ENCODE measurements at regions of chr6 and their contacts with region 1.

Region 1: GRCh38 chr6:26156076-26156849 is 69.0 kb downstream of the HFE start:
- DNase-seq: peak; percentile 80 to 92 (median 88)
- ATAC-seq: peak; percentile 61
- H3K4me3 ChIP-seq: peak overlapping the region; percentile 82
- H3K4me3 Mint-ChIP-seq: peak overlapping the region; percentile 96 to 100 (median 98)
- H3K27ac ChIP-seq: peak overlapping the region; percentile 92
- H3K27ac Mint-ChIP-seq: peak overlapping the region; percentile 95 to 99 (median 98)
- H3K4me1 ChIP-seq: peaks cover 19 to 23% of the 10 kb centered on the region in 2 donors
- H3K4me1 Mint-ChIP-seq: peaks cover 16 to 58% (median 30%) of the 10 kb centered on the region in 7 donors
- H3K27me3 ChIP-seq: no peaks in the 10 kb centered on the region
- H3K27me3 Mint-ChIP-seq: peaks cover 0 to 33% (median 0%) of the 10 kb centered on the region in 5 donors

Region 2: DNA sequence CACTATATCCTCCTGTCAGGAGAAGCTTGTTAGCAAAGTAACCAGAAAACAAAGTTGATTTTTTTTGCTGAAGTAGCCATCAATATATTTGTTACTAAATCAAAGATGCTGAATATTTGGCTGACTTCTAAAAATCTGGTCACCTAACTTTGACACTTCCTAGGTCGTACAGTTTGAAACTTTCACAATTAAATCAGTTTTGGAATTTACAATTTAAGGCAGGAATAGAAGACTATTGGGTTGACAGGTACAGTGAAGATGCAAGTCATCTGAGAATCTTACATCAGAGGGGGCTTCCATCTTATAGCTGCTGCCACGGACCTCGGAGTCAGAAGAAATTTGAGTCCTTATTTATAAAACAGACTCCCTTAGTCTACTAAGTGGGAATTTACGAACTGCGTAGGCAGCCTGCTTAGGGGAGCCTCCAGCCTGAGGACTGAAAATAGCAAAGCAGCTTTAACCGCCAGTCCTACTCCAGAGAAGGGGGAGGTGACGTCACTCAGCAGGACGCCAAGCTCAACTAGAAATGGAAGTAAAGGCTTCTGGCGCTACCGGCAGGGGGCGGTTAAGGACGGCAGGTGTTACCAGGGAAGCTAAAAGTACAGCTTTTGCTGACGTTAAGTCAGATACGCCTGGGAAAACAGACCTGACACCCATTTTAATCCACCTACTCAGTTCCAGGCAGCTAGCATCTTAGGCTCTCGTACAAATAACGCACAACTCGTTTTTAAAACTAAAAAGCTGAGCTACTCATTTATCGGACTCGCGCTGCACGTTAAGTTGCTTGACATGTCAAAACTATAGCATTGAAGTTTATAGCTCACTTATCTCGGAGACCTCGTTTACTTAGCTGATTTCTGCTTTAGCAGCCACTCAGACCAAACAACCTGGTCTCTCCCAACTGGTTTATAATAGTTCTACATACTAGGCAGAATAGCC is 130.1 kb before region 1 on chr6:
- CTCF ChIA-PET with region 1: interaction called, 4 read pairs
- POLR2A ChIA-PET with region 1: interaction called, 409 read pairs
- intact Hi-C with region 1: loop called in 1 of 2 experiments (anchors 1 kb)
- DNase-seq: peak; percentile 82 to 98 (median 95)
- ATAC-seq: peak; percentile 60
- H3K4me3 ChIP-seq: peak overlapping the region; percentile 75
- H3K4me3 Mint-ChIP-seq: peak overlapping the region; percentile 81 to 99 (median 94)
- H3K27ac ChIP-seq: peak overlapping the region; percentile 94
- H3K27ac Mint-ChIP-seq: peak overlapping the region; percentile 93 to 100 (median 98)
- H3K4me1 ChIP-seq: peaks cover 11 to 22% of the 10 kb centered on the region in 2 donors
- H3K4me1 Mint-ChIP-seq: peaks cover 12 to 81% (median 50%) of the 10 kb centered on the region in 7 donors
- H3K27me3 ChIP-seq: no peaks in the 10 kb centered on the region
- H3K27me3 Mint-ChIP-seq: peaks cover 0 to 9% (median 0%) of the 10 kb centered on the region in 5 donors

Region 3: DNA sequence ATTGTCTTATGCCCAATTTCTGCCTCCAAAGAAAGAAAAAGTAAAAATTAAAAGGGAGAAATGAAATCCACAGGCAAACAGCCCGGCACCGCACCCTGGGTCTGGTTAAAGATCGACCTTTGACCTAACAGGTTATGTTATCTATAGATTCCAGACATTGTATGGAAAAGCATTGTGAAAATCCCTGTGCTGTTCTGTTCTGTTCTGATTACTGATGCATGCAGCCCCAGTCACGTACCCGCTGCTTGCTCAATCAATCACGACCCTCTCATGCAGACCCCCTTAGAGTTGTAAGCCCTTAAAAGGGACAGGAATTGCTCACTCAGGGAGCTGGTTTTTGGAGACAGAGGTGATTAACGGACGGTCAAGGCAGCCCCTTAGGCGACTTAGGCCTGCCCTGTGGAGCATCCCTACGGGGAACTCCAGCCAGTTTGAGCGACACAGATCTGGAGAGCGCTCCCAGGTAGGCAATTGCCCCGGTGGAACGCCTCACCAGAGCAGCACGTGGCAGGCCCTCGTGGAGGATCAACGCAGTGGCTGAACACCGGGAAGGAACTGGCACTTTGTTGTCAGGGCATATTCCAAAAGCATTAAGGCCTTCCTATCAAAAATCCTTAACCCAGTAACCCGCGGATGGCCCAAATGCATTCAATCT is 81.1 kb before region 1 on chr6:
- CTCF ChIA-PET with region 1: no interaction called
- POLR2A ChIA-PET with region 1: no interaction called
- intact Hi-C with region 1: no loop called
- DNase-seq: no peak
- ATAC-seq: no peak
- H3K4me3 ChIP-seq: no peak overlapping the region
- H3K4me3 Mint-ChIP-seq: no peak overlapping the region
- H3K27ac ChIP-seq: no peak overlapping the region
- H3K27ac Mint-ChIP-seq: no peak overlapping the region
- H3K4me1 ChIP-seq: no peaks in the 10 kb centered on the region
- H3K4me1 Mint-ChIP-seq: peaks cover 0 to 6% (median 0%) of the 10 kb centered on the region in 7 donors
- H3K27me3 ChIP-seq: no peaks in the 10 kb centered on the region
- H3K27me3 Mint-ChIP-seq: peaks cover 0 to 20% (median 3%) of the 10 kb centered on the region in 5 donors

Region 4: GRCh38 chr6:26097268-26097875 is 58.9 kb before region 1 on chr6:
- CTCF ChIA-PET with region 1: interaction called, 7 read pairs
- POLR2A ChIA-PET with region 1: interaction called, 172 read pairs
- intact Hi-C with region 1: no loop called
- DNase-seq: peak; percentile 23 to 75 (median 61)
- ATAC-seq: peak; percentile 92
- H3K4me3 ChIP-seq: no peak overlapping the region
- H3K4me3 Mint-ChIP-seq: no peak overlapping the region
- H3K27ac ChIP-seq: no peak overlapping the region
- H3K27ac Mint-ChIP-seq: no peak overlapping the region
- H3K4me1 ChIP-seq: no peaks in the 10 kb centered on the region
- H3K4me1 Mint-ChIP-seq: peaks cover 4 to 13% (median 8%) of the 10 kb centered on the region in 7 donors
- H3K27me3 ChIP-seq: no peaks in the 10 kb centered on the region
- H3K27me3 Mint-ChIP-seq: peaks cover 0 to 9% (median 0%) of the 10 kb centered on the region in 5 donors

Region 5: GRCh38 chr6:26141378-26141904 is 14.8 kb before region 1 on chr6:
- CTCF ChIA-PET with region 1: no interaction called
- POLR2A ChIA-PET with region 1: interaction called, 50 read pairs
- intact Hi-C with region 1: no loop called
- DNase-seq: no peak
- ATAC-seq: no peak
- H3K4me3 ChIP-seq: no peak overlapping the region
- H3K4me3 Mint-ChIP-seq: no peak overlapping the region
- H3K27ac ChIP-seq: no peak overlapping the region
- H3K27ac Mint-ChIP-seq: peak overlapping the region in 3 of 9 donors; percentile 13 to 59 (median 38)
- H3K4me1 ChIP-seq: no peaks in the 10 kb centered on the region
- H3K4me1 Mint-ChIP-seq: peaks cover 2 to 17% (median 9%) of the 10 kb centered on the region in 7 donors
- H3K27me3 ChIP-seq: no peaks in the 10 kb centered on the region
- H3K27me3 Mint-ChIP-seq: peaks cover 0 to 2% (median 0%) of the 10 kb centered on the region in 5 donors

Region 6: GRCh38 chr6:26223650-26224546 is 67.6 kb after region 1 on chr6:
- CTCF ChIA-PET with region 1: interaction called, 5 read pairs
- POLR2A ChIA-PET with region 1: interaction called, 89 read pairs
- intact Hi-C with region 1: no loop called
- DNase-seq: peak in 7 of 9 donors; percentile 79 to 89 (median 84)
- ATAC-seq: peak; percentile 93
- H3K4me3 ChIP-seq: peak overlapping the region; percentile 77
- H3K4me3 Mint-ChIP-seq: no peak overlapping the region
- H3K27ac ChIP-seq: peak overlapping the region; percentile 77
- H3K27ac Mint-ChIP-seq: no peak overlapping the region
- H3K4me1 ChIP-seq: peaks cover 14 to 18% of the 10 kb centered on the region in 2 donors
- H3K4me1 Mint-ChIP-seq: peaks cover 10 to 25% (median 18%) of the 10 kb centered on the region in 7 donors
- H3K27me3 ChIP-seq: no peaks in the 10 kb centered on the region
- H3K27me3 Mint-ChIP-seq: no peaks in the 10 kb centered on the region

Region 7: GRCh38 chr6:27132532-27133280 is 976.4 kb after region 1 on chr6:
- CTCF ChIA-PET with region 1: no interaction called
- POLR2A ChIA-PET with region 1: interaction called, 68 read pairs
- intact Hi-C with region 1: loop called (anchors 1 to 2 kb)
- DNase-seq: peak; percentile 73 to 99 (median 97)
- ATAC-seq: peak; percentile 93
- H3K4me3 ChIP-seq: peak overlapping the region; percentile 90
- H3K4me3 Mint-ChIP-seq: no peak overlapping the region
- H3K27ac ChIP-seq: peak overlapping the region; percentile 81
- H3K27ac Mint-ChIP-seq: no peak overlapping the region
- H3K4me1 ChIP-seq: peaks cover 10 to 18% of the 10 kb centered on the region in 2 donors
- H3K4me1 Mint-ChIP-seq: peaks cover 6 to 49% (median 21%) of the 10 kb centered on the region in 7 donors
- H3K27me3 ChIP-seq: no peaks in the 10 kb centered on the region
- H3K27me3 Mint-ChIP-seq: no peaks in the 10 kb centered on the region

Region 8: DNA sequence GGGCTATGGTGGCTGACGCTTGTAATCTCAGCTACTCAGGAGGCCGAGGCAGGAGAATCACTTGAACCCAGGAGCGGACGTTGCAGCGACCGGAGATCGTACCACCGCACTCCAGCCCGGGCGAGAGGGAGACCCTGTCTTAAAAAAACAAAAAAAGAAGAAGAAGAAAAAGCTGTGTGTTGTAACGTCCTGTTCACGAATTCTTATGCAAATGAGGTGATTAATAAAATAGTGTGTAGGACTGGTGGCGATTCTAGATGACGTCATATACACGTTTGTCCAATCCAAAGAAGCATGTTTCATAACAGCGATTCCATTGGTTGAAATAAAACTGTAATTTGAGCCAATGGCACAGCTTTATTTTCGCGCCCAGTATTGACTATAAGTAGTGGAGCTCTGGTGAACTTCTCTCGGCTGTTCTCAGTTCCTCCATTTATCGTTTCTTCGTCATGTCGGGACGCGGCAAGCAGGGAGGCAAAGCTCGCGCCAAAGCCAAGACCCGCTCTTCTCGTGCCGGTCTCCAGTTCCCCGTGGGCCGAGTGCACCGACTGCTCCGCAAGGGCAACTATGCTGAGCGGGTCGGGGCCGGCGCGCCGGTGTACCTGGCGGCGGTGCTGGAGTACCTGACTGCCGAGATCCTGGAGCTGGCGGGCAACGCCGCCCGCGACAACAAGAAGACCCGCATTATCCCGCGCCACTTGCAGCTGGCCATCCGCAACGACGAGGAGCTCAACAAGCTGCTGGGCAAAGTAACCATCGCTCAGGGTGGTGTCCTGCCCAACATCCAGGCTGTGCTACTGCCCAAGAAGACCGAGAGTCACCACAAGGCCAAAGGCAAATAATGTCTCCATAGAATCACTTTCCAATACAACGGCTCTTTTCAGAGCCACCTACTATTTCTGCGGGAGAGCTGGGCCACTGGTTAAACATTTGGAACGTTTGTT is 1708.9 kb after region 1 on chr6:
- CTCF ChIA-PET with region 1: no interaction called
- POLR2A ChIA-PET with region 1: interaction called, 82 read pairs
- intact Hi-C with region 1: no loop called
- DNase-seq: peak; percentile 56 to 93 (median 89)
- ATAC-seq: peak; percentile 85
- H3K4me3 ChIP-seq: peak overlapping the region; percentile 74
- H3K4me3 Mint-ChIP-seq: peak overlapping the region; percentile 85 to 99 (median 97)
- H3K27ac ChIP-seq: peak overlapping the region; percentile 71
- H3K27ac Mint-ChIP-seq: peak overlapping the region; percentile 88 to 98 (median 95)
- H3K4me1 ChIP-seq: peaks cover 8 to 25% of the 10 kb centered on the region in 2 donors
- H3K4me1 Mint-ChIP-seq: peaks cover 22 to 64% (median 46%) of the 10 kb centered on the region in 7 donors
- H3K27me3 ChIP-seq: no peaks in the 10 kb centered on the region
- H3K27me3 Mint-ChIP-seq: peaks cover 0 to 16% (median 0%) of the 10 kb centered on the region in 5 donors